Left cardiac atrium (tissue), 4 donors: ENCODE measurements at regions of chr15 and their contacts with region 1.

Region 1: DNA sequence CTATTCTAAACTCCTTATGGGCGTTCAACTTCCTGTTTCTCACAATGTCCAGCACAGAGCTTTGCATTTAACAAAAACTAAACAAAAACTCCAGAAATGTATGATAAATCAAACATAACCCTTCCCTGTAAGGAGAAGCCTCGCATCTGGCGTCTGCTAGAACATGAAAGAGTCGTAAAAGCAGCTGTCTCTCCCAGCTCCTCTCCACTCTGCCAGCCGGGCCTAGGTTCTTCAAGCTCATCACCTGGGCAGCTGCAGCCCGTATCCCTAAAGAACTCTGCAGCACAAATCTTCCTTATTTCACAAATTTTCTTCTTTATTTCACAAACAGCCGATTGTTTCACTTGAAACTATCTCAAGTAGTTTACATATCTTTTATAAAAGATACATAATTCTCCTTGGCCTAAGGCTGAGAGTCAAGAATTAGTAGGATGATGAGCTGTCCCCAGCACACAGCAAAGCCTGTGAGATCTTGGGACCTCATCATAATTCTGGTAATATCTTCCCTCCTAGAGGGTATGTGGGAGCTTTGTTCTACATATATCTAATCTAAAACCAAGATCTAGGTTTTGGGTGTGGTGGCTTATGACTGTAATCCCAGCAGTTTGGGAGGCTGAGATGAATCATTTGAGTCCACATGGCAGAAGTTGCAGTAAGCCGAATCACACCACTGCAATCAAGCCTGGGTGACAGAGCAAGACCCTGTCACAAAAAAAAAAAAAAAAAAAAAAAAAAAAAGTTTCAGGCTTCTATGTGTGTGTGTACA is 35.3 kb downstream of the ANXA2 start:
- DNase-seq: no peak
- ATAC-seq: peak in 1 of 2 donors; percentile 50

Region 2: DNA sequence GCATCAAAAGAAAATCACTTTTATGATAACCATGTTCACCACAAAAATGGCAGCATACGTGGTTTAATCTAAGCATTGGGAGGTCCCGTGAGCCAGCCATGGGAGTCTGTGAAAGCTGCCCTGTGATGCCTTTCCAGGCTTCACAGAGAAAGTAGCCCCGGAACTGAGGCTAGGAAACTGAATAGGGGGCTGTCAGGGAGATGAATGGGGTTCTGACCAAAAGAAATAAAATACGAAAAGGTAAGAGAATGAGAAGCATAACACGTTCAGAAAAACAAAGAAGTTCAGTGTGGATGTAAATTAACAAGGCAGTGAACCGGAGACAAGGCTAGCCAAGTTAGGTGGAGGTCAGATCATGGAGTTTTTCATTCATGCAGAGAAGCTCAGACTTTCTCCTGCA is 83.6 kb before region 1 on chr15:
- intact Hi-C with region 1: no loop called
- DNase-seq: no peak
- ATAC-seq: no peak

Region 3: GRCh38 chr15:60444289-60444912 is 81.9 kb after region 1 on chr15:
- intact Hi-C with region 1: loop called (anchors 5 kb)
- DNase-seq: no peak
- ATAC-seq: no peak